A549 (cell line): ENCODE measurements at regions of chr21 and their contacts with region 1.

Region 1: GRCh38 chr21:42381334-42381984 is 14.4 kb downstream of the TMPRSS3 start:
- DNase-seq: peak; percentile 26 to 61
- ATAC-seq: peak; percentile 77 to 89
- H3K4me3 ChIP-seq: no peak overlapping the region
- H3K27ac ChIP-seq: no peak overlapping the region
- H3K4me1 ChIP-seq: no peaks in the 10 kb centered on the region; the same call in 2 of the 3 replicates
- CTCF ChIP-seq: peak; percentile 59
- EP300 ChIP-seq: no peak
- POLR2A ChIP-seq: no peak
- RAD21 ChIP-seq: peak; percentile 68 to 77

Region 2: GRCh38 chr21:42309753-42310221 is 71.7 kb before region 1 on chr21:
- CTCF ChIA-PET with region 1: interaction called, 12 read pairs
- POLR2A ChIA-PET with region 1: no interaction called
- DNase-seq: peak; percentile 11 to 33
- ATAC-seq: peak; percentile 48 to 85; a peak in 4 of 6 replicates
- H3K4me3 ChIP-seq: no peak overlapping the region
- H3K27ac ChIP-seq: no peak overlapping the region
- H3K4me1 ChIP-seq: no peaks in the 10 kb centered on the region
- CTCF ChIP-seq: peak; percentile 52
- EP300 ChIP-seq: no peak
- POLR2A ChIP-seq: no peak
- RAD21 ChIP-seq: peak; percentile 62 to 65

Region 3: GRCh38 chr21:42337830-42338728 is 43.4 kb before region 1 on chr21:
- CTCF ChIA-PET with region 1: interaction called, 14 read pairs
- POLR2A ChIA-PET with region 1: no interaction called
- DNase-seq: peak; percentile 5 to 65
- ATAC-seq: peak; percentile 70 to 88; a peak in 5 of 6 replicates
- H3K4me3 ChIP-seq: no peak overlapping the region
- H3K27ac ChIP-seq: no peak overlapping the region
- H3K4me1 ChIP-seq: no peaks in the 10 kb centered on the region
- CTCF ChIP-seq: peak; percentile 43
- EP300 ChIP-seq: no peak
- POLR2A ChIP-seq: no peak
- RAD21 ChIP-seq: peak; percentile 38 to 43; a peak in 4 of 5 replicates

Region 4: DNA sequence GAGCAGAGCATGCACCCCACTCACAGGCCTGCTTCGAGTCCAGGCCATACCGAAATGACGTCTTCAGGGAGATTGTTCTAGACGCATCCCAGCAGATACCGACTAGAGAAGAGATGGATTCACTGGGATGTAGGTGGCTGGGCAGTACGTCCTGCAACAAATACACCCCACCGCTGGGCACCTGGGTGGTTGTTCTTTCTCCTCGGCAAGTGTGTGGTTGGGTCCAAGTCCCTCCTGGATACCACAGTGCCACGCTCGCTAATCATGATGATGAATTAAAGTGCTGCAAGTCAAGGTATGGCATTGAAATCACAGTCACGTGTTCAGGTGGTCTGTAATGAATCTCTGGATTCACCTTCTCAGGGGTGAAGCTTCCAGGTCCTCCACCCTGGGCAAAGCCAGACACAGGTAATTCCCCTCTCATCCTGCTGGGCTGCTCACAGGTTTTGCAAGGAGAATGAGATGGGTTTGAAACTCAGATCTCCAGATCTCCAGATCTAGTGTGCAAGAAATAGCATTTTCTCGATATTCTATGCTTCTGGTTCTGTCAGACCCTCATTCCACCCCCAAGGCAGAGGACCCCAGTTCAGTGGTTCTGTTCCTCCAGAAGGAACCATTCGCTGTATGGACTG is 68.0 kb after region 1 on chr21:
- CTCF ChIA-PET with region 1: interaction called, 14 read pairs
- POLR2A ChIA-PET with region 1: no interaction called
- DNase-seq: no peak
- ATAC-seq: peak in 1 of 2 experiments; percentile 16; a peak in 3 of 6 replicates
- H3K4me3 ChIP-seq: no peak overlapping the region
- H3K27ac ChIP-seq: no peak overlapping the region
- H3K4me1 ChIP-seq: peaks cover 4% of the 10 kb centered on the region; the same call in 1 of the 3 replicates
- CTCF ChIP-seq: no peak
- EP300 ChIP-seq: no peak
- POLR2A ChIP-seq: no peak
- RAD21 ChIP-seq: no peak